ENCODE measurements at regions of chr20 and their contacts with region 1.

Region 1: GRCh38 chr20:19995220-19995863 is 21.8 kb upstream of the NAA20 start:
- DNase-seq: no peak
- ATAC-seq: peak in 2 of 4 donors; percentile 30 to 53
- H3K4me3 ChIP-seq: no peak overlapping the region
- H3K27ac ChIP-seq: peak overlapping the region; percentile 83
- H3K4me1 ChIP-seq: peaks cover 75% of the 10 kb centered on the region
- H3K27me3 ChIP-seq: no peaks in the 10 kb centered on the region
- CTCF ChIP-seq: peak; percentile 79

Region 2: DNA sequence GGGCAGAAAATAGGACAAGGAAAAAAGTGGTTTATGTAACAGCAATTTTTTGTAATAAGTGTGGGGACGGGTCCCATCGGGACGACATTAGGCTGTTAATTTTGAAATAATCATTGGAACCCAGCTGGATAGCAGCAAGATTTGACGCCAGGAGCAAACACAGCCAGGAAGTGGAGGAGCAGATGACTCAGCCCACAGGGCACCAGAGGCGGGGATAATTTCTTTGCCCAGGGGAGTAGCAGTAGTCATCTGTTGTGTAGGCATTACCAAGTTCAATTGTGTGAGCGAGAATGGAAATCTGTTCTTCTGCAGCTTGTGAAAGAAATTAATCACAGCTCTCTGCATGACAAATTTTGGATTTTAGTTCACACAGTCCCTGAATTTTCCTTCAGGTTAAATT is 259.9 kb before region 1 on chr20:
- intact Hi-C with region 1: no loop called
- DNase-seq: peak; percentile 78 to 87
- ATAC-seq: peak; percentile 94 to 98 (median 96)
- H3K4me3 ChIP-seq: no peak overlapping the region
- H3K27ac ChIP-seq: peak overlapping the region; percentile 75
- H3K4me1 ChIP-seq: peaks cover 15% of the 10 kb centered on the region
- H3K27me3 ChIP-seq: no peaks in the 10 kb centered on the region
- CTCF ChIP-seq: no peak

Region 3: GRCh38 chr20:19784511-19785172 is 210.7 kb before region 1 on chr20:
- intact Hi-C with region 1: loop called (anchors 2 to 5 kb)
- DNase-seq: peak; percentile 44 to 67
- ATAC-seq: peak; percentile 84 to 91 (median 87)
- H3K4me3 ChIP-seq: peak overlapping the region; percentile 16
- H3K27ac ChIP-seq: peak overlapping the region; percentile 63
- H3K4me1 ChIP-seq: peaks cover 39% of the 10 kb centered on the region
- H3K27me3 ChIP-seq: no peaks in the 10 kb centered on the region
- CTCF ChIP-seq: peak; percentile 81

Region 4: GRCh38 chr20:19889011-19889953 is 106.1 kb before region 1 on chr20:
- intact Hi-C with region 1: loop called in 1 of 2 experiments (anchors 10 kb)
- DNase-seq: peak; percentile 40 to 75
- ATAC-seq: peak; percentile 58 to 74 (median 68)
- H3K4me3 ChIP-seq: peak overlapping the region; percentile 55
- H3K27ac ChIP-seq: peak overlapping the region; percentile 86
- H3K4me1 ChIP-seq: peaks cover 64% of the 10 kb centered on the region
- H3K27me3 ChIP-seq: no peaks in the 10 kb centered on the region
- CTCF ChIP-seq: no peak

Region 5: GRCh38 chr20:19934792-19935491 is 60.4 kb before region 1 on chr20:
- intact Hi-C with region 1: loop called in 1 of 2 experiments (anchors 5 kb)
- DNase-seq: peak; percentile 49 to 66
- ATAC-seq: peak; percentile 76 to 88 (median 82)
- H3K4me3 ChIP-seq: peak overlapping the region; percentile 47
- H3K27ac ChIP-seq: peak overlapping the region; percentile 76
- H3K4me1 ChIP-seq: peaks cover 28% of the 10 kb centered on the region
- H3K27me3 ChIP-seq: no peaks in the 10 kb centered on the region
- CTCF ChIP-seq: no peak

Region 6: DNA sequence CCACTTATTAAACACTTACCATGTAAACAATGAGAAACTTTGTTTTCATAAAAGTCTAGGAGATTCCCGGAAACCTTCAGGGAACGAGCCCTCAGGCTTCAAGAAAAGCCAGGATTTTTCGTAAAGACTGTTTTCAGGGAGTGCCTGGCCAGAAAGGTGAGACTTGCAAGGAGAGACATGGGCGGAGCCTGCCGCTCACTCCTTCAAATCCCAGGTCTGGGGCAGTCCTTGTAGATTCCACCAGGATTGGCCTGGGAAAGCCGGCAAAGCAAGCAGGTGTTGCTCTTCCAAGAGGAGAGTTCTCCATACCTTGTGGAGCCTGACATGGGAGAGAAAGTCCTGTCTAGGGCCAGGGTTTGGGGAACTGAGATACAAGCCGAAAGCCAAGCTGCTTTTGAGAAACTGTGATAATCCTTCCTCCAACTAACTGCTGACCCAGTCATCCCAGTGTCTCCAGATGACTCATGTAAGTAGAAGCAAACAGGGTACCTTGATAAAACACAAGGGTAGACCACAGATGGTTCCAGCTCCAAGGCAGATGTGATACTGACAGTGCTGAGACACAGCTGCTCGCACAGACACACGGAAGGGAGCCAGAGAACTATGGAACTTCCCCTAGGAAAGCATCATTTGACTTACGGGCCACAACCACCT is 47.6 kb before region 1 on chr20:
- intact Hi-C with region 1: no loop called
- DNase-seq: no peak
- ATAC-seq: no peak
- H3K4me3 ChIP-seq: no peak overlapping the region
- H3K27ac ChIP-seq: no peak overlapping the region
- H3K4me1 ChIP-seq: peaks cover 24% of the 10 kb centered on the region
- H3K27me3 ChIP-seq: no peaks in the 10 kb centered on the region
- CTCF ChIP-seq: no peak

Region 7: GRCh38 chr20:19974626-19975435 is 20.5 kb before region 1 on chr20:
- intact Hi-C with region 1: loop called in 1 of 2 experiments (anchors 1 kb)
- DNase-seq: peak; percentile 90 to 95
- ATAC-seq: peak; percentile 90 to 93 (median 92)
- H3K4me3 ChIP-seq: peak overlapping the region; percentile 64
- H3K27ac ChIP-seq: peak overlapping the region; percentile 91
- H3K4me1 ChIP-seq: peaks cover 67% of the 10 kb centered on the region
- H3K27me3 ChIP-seq: no peaks in the 10 kb centered on the region
- CTCF ChIP-seq: no peak